MCF 10A (cell line): ENCODE measurements at regions of chr10 and their contacts with region 1.

Region 1: GRCh38 chr10:50874723-50875122 is 10.7 kb downstream of the A1CF start:
- DNase-seq: peak; percentile 28
- H3K4me3 Mint-ChIP-seq: no peak overlapping the region
- H3K27ac Mint-ChIP-seq: no peak overlapping the region
- H3K4me1 Mint-ChIP-seq: no peaks in the 10 kb centered on the region
- H3K27me3 Mint-ChIP-seq: peaks cover 46% of the 10 kb centered on the region
- CTCF ChIP-seq: no peak

Region 2: GRCh38 chr10:50824782-50825181 is 49.9 kb before region 1 on chr10:
- CTCF ChIA-PET with region 1: no interaction called
- POLR2A ChIA-PET with region 1: no interaction called
- intact Hi-C with region 1: loop called (anchors 5 kb)
- DNase-seq: no peak
- H3K4me3 Mint-ChIP-seq: no peak overlapping the region
- H3K27ac Mint-ChIP-seq: no peak overlapping the region
- H3K4me1 Mint-ChIP-seq: no peaks in the 10 kb centered on the region
- H3K27me3 Mint-ChIP-seq: peaks cover 76% of the 10 kb centered on the region
- CTCF ChIP-seq: no peak

Region 3: DNA sequence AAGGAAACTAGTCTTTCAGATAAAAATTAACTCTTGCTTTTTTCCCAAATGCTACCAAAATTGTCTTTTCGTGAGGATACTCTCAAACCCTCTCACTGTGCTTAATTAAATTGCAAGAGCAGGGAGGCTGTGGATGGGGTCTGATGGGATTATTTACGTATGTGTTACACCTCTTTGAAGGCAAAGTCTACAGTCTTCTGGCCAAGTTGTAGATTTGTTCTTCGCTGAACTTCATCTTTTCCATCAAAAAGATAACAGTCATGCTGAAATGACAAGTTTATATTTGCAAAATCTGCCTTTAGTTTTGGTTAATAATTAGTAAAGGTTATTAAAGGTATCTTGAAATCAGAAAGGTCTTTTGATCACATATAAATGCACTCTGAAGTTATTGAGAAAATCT is 12.0 kb before region 1 on chr10:
- CTCF ChIA-PET with region 1: no interaction called
- POLR2A ChIA-PET with region 1: no interaction called
- intact Hi-C with region 1: no loop called
- DNase-seq: no peak
- H3K4me3 Mint-ChIP-seq: no peak overlapping the region
- H3K27ac Mint-ChIP-seq: no peak overlapping the region
- H3K4me1 Mint-ChIP-seq: no peaks in the 10 kb centered on the region
- H3K27me3 Mint-ChIP-seq: peaks cover 60% of the 10 kb centered on the region
- CTCF ChIP-seq: no peak